H1 (cell line): ENCODE measurements at regions of chr4 and their contacts with region 1.

Region 1: DNA sequence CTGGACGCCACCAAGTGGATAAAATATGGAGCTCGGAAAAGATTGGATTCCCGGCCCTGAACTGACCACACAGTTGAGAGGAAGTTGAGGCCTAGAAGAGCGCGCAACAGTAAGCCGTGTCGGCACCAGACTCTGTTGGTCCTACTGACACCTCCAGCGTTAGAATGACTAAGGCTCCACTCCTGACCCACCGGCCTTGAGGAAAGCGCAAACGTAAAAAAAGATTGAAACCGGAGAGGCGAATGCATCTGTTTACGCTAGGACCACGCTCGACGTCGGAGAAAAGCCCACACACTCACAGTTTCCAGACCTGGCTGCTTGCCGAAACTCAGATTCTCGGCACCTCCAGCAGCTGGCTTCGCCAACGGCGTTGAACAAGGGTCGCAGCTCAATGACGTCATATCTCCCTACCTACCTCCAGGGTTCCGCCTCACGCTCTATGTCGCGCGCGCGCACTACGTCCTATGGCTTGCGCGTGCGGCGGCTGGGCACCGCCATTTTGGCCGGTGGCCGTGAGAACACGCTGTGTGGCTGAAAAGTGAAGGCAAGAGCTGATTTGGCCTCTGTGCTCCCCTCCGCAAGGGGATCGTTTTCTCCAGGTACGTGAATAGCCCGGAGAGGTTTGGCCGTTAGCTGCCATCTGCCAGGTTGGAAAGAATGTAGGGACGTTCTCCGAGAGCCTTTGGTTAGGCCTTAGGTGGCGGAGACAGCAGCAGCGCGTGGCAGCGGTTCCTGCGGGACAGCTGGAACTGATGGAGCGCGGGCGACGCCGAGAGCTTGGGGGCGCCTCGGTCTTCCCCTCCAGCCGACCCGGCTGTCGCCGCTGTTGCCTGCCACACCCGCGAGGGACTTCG is at the starts of genes ABCE1 and ANAPC10:
- DNase-seq: peak; percentile 89 to 95
- H3K4me3 ChIP-seq: peak within 1 kb of the TSS; percentile 88 to 98 (median 96)
- H3K27ac ChIP-seq: peak within 1 kb of the TSS; percentile 90
- H3K4me1 ChIP-seq: peaks cover 0 to 6% (median 1%) of the 10 kb centered on the region in 4 experiments; a peak in 2 of 7 replicates
- H3K27me3 ChIP-seq: no peaks in the 10 kb centered on the region
- CTCF ChIP-seq: no peak
- EP300 ChIP-seq: no peak
- POLR2A ChIP-seq: peak; percentile 93 to 94
- RAD21 ChIP-seq: no peak
- total RNA-seq, gene ABCE1: 125 and 126 TPM in 2 replicates
- total RNA-seq, gene ANAPC10: 21.6 and 23.3 TPM in 2 replicates

Region 2: GRCh38 chr4:145177906-145178538 is 80.0 kb after region 1 on chr4:
- CTCF ChIA-PET with region 1: no interaction called
- POLR2A ChIA-PET with region 1: interaction called, 10 read pairs
- DNase-seq: no peak
- H3K4me3 ChIP-seq: peak overlapping the region; percentile 67 to 88 (median 81)
- H3K27ac ChIP-seq: no peak overlapping the region
- H3K4me1 ChIP-seq: peaks cover 0 to 3% (median 1%) of the 10 kb centered on the region in 4 experiments; a peak in 4 of 7 replicates
- H3K27me3 ChIP-seq: no peaks in the 10 kb centered on the region
- CTCF ChIP-seq: no peak
- EP300 ChIP-seq: no peak
- POLR2A ChIP-seq: no peak
- RAD21 ChIP-seq: no peak

Region 3: DNA sequence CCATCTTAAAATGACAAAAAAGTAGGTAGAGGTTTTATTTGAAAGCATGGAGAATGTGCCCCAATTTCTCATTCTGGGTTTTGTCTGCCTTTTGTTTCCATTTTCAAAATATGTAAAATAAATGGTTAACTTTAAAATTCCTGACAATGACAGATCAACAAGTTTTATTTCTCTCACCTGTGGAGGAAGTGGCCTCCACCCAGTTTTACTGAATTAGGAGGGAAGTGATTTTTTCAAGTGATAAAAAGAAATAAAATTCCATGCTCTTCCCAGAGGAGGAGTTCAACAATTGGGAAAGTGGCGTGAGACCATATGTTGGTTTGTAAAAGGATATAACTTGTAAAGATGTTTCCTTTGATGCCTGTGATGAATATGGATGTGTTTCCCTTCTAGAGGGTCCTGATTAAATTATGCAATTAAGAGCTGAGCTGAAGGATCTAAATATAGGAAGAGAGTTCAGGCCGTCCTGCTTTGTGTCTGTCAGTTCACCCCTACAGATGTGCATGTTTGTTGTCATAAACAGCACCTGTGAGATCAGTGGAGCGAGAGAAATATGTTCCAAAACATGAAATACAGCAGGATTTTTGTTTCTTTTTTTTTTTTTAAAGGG is 403.1 kb after region 1 on chr4:
- CTCF ChIA-PET with region 1: no interaction called
- POLR2A ChIA-PET with region 1: no interaction called
- DNase-seq: no peak
- H3K4me3 ChIP-seq: no peak overlapping the region
- H3K27ac ChIP-seq: no peak overlapping the region
- H3K4me1 ChIP-seq: peaks cover 0 to 8% (median 0%) of the 10 kb centered on the region in 4 experiments; a peak in 2 of 7 replicates
- H3K27me3 ChIP-seq: no peaks in the 10 kb centered on the region
- CTCF ChIP-seq: no peak
- EP300 ChIP-seq: no peak
- POLR2A ChIP-seq: no peak
- RAD21 ChIP-seq: no peak